ENCODE measurements at regions of chrX and their contacts with region 1.

Region 1: DNA sequence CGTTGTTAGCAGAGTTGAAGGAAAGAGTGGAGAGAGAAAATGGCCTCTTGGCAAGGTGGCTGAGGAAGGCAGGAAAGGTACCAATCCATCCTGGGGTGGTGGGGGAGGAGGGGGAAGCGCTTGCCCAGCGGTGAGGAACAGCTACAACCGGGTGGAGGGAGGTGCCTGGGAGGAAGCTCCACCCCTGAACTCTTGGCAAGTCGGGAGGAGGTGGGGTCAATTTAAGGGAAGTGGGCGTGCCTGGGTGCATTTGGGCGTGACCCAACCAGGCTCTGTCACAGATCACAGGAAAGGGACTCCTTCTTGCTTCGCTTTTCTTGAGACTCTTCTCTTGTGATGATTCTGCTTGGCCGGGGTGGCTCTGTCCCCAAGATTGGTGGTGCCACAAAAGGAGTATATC is 41.7 kb downstream of the BCORL1 start:
- DNase-seq: peak; percentile 64 to 92 (median 80)
- ATAC-seq: peak; percentile 100
- H3K4me3 ChIP-seq: no peak overlapping the region
- H3K4me3 Mint-ChIP-seq: peak overlapping the region; percentile 57
- H3K27ac ChIP-seq: peak overlapping the region in 1 of 2 experiments; percentile 56
- H3K27ac Mint-ChIP-seq: peak overlapping the region; percentile 75
- H3K4me1 ChIP-seq: peaks cover 7% of the 10 kb centered on the region
- H3K4me1 Mint-ChIP-seq: peaks cover 13% of the 10 kb centered on the region
- H3K27me3 ChIP-seq: no peaks in the 10 kb centered on the region
- H3K27me3 Mint-ChIP-seq: no peaks in the 10 kb centered on the region
- CTCF ChIP-seq: no peak

Region 2: DNA sequence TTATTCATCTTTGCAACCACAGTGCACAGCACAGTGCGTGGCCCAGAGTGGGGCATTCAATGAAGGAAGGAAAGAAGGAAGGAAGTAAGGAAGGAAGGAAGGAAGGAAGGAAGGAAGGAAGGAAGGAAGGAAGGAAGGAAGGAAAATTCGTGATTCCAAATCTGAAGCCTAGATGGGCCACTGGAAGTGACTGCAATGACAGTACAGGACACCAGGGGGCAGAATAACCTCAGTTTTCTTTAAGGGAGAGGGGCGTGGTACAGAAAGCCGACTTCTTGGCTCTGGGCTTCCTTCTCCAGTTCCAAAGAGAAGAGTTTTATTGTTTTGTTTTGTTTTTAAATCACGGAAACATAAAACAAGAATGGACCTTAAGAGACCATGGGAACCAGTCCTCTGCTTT is 417.2 kb before region 1 on chrX:
- CTCF ChIA-PET with region 1: no interaction called
- POLR2A ChIA-PET with region 1: no interaction called
- intact Hi-C with region 1: loop called (anchors 1 to 10 kb)
- DNase-seq: peak; percentile 9 to 72 (median 60)
- ATAC-seq: peak; percentile 63
- H3K4me3 ChIP-seq: no peak overlapping the region
- H3K4me3 Mint-ChIP-seq: no peak overlapping the region
- H3K27ac ChIP-seq: no peak overlapping the region
- H3K27ac Mint-ChIP-seq: no peak overlapping the region
- H3K4me1 ChIP-seq: peaks cover 15% of the 10 kb centered on the region
- H3K4me1 Mint-ChIP-seq: peaks cover 19% of the 10 kb centered on the region
- H3K27me3 ChIP-seq: no peaks in the 10 kb centered on the region
- H3K27me3 Mint-ChIP-seq: no peaks in the 10 kb centered on the region
- CTCF ChIP-seq: peak; percentile 54

Region 3: DNA sequence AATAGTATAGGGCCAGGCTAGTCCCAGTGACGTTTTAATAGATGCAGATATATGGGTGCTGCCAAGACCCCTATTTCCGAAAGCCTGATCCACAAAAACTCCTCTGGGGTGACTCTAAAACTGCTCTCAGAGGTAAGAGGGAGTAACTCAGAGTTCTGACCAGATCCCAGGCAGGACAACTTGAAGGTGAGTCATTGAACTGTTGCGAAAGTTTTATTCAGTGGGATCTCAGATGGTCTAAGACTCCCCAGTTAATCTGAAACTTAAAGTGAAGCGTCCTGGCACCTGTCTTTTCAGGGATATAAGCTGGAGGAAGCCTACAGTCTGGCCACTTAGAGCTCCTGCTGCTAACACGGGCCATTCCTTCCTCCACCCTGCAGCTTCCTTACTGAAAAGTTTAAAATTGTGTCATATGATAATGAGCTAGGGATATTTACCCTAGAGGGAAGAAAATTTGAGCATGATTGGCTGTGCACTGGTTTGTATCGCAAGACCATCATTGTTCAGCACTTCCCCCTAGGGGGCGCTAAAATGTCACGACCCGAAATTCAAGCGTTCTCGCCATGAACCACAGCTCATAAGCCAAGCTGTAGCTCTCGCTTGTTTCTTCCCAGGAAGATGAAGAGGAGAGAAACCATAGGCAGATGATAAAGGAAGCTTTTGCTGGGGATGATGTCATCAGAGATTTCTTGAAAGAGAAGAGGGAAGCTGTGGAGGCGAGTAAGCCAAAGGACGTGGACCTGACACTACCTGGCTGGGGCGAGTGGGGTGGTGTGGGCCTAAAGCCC is 98.6 kb before region 1 on chrX:
- CTCF ChIA-PET with region 1: interaction called, 220 read pairs
- POLR2A ChIA-PET with region 1: interaction called, 4 read pairs
- intact Hi-C with region 1: loop called (anchors 1 kb)
- DNase-seq: peak; percentile 35 to 81 (median 70)
- ATAC-seq: peak; percentile 75
- H3K4me3 ChIP-seq: no peak overlapping the region
- H3K4me3 Mint-ChIP-seq: no peak overlapping the region
- H3K27ac ChIP-seq: no peak overlapping the region
- H3K27ac Mint-ChIP-seq: no peak overlapping the region
- H3K4me1 ChIP-seq: no peaks in the 10 kb centered on the region
- H3K4me1 Mint-ChIP-seq: peaks cover 4% of the 10 kb centered on the region
- H3K27me3 ChIP-seq: no peaks in the 10 kb centered on the region
- H3K27me3 Mint-ChIP-seq: no peaks in the 10 kb centered on the region
- CTCF ChIP-seq: peak; percentile 51

Region 4: GRCh38 chrX:129939986-129940385 is 84.1 kb before region 1 on chrX:
- CTCF ChIA-PET with region 1: interaction called, 18 read pairs
- POLR2A ChIA-PET with region 1: no interaction called
- intact Hi-C with region 1: no loop called
- DNase-seq: no peak
- ATAC-seq: no peak
- H3K4me3 ChIP-seq: no peak overlapping the region
- H3K4me3 Mint-ChIP-seq: no peak overlapping the region
- H3K27ac ChIP-seq: no peak overlapping the region
- H3K27ac Mint-ChIP-seq: no peak overlapping the region
- H3K4me1 ChIP-seq: no peaks in the 10 kb centered on the region
- H3K4me1 Mint-ChIP-seq: peaks cover 9% of the 10 kb centered on the region
- H3K27me3 ChIP-seq: no peaks in the 10 kb centered on the region
- H3K27me3 Mint-ChIP-seq: no peaks in the 10 kb centered on the region
- CTCF ChIP-seq: no peak

Region 5: DNA sequence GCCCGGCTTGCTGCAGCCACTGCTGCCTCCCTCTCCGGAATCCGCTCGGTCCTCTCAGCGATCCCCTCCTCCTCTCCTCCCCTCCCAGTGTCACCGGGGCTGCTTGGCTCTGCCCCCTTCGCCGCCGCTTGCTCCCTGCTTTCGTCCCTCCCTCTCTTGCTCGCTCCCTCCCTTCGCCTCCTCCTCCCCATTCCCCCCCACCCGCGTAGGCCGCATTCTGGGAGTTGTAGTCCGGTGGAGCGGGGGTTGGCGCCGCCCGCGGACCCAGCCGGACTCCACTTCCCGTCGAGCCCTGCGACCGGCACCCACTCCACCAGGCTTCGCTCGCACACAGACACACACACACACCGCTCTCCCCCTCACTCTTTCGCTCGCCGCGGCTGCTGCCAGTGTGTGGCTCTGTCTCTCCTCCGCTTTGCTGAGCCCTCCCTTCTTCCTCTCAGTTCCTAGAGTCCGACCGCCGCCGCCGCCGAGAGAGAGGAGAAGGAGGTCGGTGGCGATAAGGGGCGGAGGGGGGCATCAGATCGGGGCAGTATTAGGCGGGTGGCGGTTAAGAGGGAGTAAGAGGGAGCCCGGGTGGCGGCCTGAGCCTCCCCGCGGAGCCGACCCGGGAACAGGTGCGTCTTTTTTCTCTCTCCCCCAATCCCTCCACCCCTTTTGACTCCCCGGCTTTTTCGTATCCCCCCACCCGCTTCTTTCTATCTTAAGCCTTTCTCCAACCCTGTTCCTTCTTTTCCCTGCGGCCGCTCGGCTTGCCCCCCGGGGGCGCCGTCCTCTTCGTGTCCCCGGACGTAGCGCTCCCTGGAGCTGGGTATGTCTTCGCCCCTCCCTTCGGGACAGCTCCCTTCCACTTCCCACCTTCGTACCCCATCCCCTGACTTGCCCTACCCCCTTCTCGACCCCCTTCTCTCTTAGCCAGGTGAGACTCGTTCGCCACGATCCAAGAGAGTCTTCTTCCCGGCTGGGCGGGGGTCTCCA is 41.6 kb before region 1 on chrX and contains the start of gene BCORL1:
- CTCF ChIA-PET with region 1: interaction called, 3 read pairs
- POLR2A ChIA-PET with region 1: no interaction called
- intact Hi-C with region 1: loop called (anchors 1 kb)
- DNase-seq: peak; percentile 76 to 95 (median 85)
- ATAC-seq: peak; percentile 88
- H3K4me3 ChIP-seq: peak within 1 kb of the TSS in 1 of 2 experiments; percentile 59
- H3K4me3 Mint-ChIP-seq: no peak within 1 kb of the TSS
- H3K27ac ChIP-seq: peak within 1 kb of the TSS; percentile 27 to 46
- H3K27ac Mint-ChIP-seq: peak within 1 kb of the TSS; percentile 71
- H3K4me1 ChIP-seq: peaks cover 4% of the 10 kb centered on the region
- H3K4me1 Mint-ChIP-seq: peaks cover 27% of the 10 kb centered on the region
- H3K27me3 ChIP-seq: no peaks in the 10 kb centered on the region
- H3K27me3 Mint-ChIP-seq: no peaks in the 10 kb centered on the region
- CTCF ChIP-seq: no peak
- total RNA-seq, gene BCORL1: 2.1 to 2.4 TPM

Region 6: DNA sequence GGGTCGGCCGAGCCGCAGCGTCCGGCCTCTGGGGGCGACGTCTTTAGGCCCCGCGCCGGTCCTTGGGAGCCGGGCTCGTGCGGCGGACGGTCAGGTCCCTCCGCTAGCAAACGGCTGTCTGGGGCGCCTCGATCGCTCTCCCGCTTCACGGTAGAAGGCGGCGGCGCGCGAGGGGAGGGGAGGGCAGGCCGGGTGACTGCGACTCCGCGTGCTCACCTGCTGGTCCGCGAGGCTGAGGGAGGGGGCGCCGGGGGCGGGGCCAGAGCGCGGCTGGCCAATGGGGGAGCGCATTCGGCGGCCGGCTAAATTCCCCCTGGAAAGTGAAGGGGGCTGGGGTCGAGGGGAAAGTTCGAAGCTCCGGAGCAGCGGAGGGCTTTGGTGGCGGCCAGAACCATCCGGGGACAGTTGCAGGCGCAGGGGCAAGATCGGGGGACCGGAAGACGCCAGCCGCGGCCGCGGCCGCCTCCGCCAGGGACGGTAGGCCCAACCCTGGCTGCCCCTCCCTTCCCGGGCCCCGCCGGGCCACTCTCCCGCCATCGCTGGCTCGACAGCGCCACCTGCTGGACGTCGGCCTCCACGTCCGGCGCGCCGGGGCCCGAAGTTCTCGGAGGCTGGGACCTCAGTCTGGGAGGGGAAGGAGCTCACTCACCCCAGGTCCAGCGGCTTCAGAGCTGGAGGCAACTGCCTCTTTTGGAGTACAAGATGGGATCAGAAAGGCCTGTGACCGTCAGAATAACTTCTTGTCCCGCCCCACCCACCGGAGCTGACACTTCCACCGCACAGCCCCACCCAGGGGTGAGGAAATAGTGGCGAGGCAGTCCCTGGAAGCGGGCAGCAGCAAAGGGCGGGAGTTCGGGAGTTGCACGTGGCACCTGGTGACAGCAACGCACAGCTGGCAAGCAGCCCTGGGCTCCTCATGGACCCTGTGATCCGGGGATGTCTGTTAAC is 36.3 kb after region 1 on chrX:
- CTCF ChIA-PET with region 1: interaction called, 8 read pairs
- POLR2A ChIA-PET with region 1: no interaction called
- intact Hi-C with region 1: loop called in 1 of 2 experiments (anchors 2 kb)
- DNase-seq: peak; percentile 54 to 91 (median 80)
- ATAC-seq: peak; percentile 87
- H3K4me3 ChIP-seq: peak overlapping the region; percentile 48 to 53
- H3K4me3 Mint-ChIP-seq: peak overlapping the region; percentile 66
- H3K27ac ChIP-seq: no peak overlapping the region
- H3K27ac Mint-ChIP-seq: no peak overlapping the region
- H3K4me1 ChIP-seq: peaks cover 7% of the 10 kb centered on the region
- H3K4me1 Mint-ChIP-seq: peaks cover 12% of the 10 kb centered on the region
- H3K27me3 ChIP-seq: no peaks in the 10 kb centered on the region
- H3K27me3 Mint-ChIP-seq: no peaks in the 10 kb centered on the region
- CTCF ChIP-seq: peak; percentile 67

Measured in CD8-positive, alpha-beta T cell (primary cell).